Heart left ventricle (tissue), 16 donors: ENCODE measurements at regions of chrX and their contacts with region 1.

Region 1: GRCh38 chrX:70096052-70096451 is 33.8 kb downstream of the OTUD6A start:
- DNase-seq: no peak
- ATAC-seq: no peak
- H3K4me3 ChIP-seq: no peak overlapping the region
- H3K27ac ChIP-seq: no peak overlapping the region
- H3K4me1 ChIP-seq: no peaks in the 10 kb centered on the region
- H3K27me3 ChIP-seq: peaks cover 0 to 4% (median 0%) of the 10 kb centered on the region in 9 donors
- CTCF ChIP-seq: peak in 5 of 12 donors; percentile 10 to 37 (median 13)
- POLR2A ChIP-seq: no peak

Region 2: DNA sequence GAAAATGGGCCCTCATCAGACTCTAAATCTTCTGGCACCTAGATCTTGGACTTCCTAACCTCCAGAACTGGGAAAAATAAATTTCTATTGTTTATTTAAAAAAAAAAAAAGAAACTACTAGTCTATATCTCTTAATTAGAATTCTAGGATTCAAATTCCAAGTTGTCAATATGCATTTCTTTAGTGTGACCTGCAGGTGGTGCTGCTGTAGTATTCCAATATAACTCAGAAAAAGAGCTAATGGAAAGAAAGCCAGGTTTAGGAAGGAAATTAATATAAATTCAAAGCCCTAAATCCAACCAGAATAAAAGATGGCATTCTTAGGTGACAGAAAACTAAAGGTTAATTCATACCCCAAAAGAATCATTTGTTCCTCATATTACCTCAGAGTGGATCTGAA is 671.9 kb before region 1 on chrX:
- intact Hi-C with region 1: loop called in 5 of 10 experiments (anchors 5 to 10 kb)
- DNase-seq: no peak
- ATAC-seq: no peak
- H3K4me3 ChIP-seq: no peak overlapping the region
- H3K27ac ChIP-seq: no peak overlapping the region
- H3K4me1 ChIP-seq: no peaks in the 10 kb centered on the region
- H3K27me3 ChIP-seq: peaks cover 0 to 15% (median 0%) of the 10 kb centered on the region in 9 donors
- CTCF ChIP-seq: peak in 9 of 12 donors; percentile 21 to 49 (median 30)
- POLR2A ChIP-seq: no peak

Region 3: GRCh38 chrX:69493193-69493592 is 602.9 kb before region 1 on chrX:
- intact Hi-C with region 1: loop called (anchors 2 to 10 kb)
- DNase-seq: peak in 1 of 5 donors; percentile 26
- ATAC-seq: peak in 3 of 4 donors; percentile 39 to 64 (median 42)
- H3K4me3 ChIP-seq: no peak overlapping the region
- H3K27ac ChIP-seq: no peak overlapping the region
- H3K4me1 ChIP-seq: no peaks in the 10 kb centered on the region
- H3K27me3 ChIP-seq: peaks cover 0 to 34% (median 0%) of the 10 kb centered on the region in 9 donors
- CTCF ChIP-seq: peak in 11 of 12 donors; percentile 11 to 50 (median 46)
- POLR2A ChIP-seq: no peak

Region 4: DNA sequence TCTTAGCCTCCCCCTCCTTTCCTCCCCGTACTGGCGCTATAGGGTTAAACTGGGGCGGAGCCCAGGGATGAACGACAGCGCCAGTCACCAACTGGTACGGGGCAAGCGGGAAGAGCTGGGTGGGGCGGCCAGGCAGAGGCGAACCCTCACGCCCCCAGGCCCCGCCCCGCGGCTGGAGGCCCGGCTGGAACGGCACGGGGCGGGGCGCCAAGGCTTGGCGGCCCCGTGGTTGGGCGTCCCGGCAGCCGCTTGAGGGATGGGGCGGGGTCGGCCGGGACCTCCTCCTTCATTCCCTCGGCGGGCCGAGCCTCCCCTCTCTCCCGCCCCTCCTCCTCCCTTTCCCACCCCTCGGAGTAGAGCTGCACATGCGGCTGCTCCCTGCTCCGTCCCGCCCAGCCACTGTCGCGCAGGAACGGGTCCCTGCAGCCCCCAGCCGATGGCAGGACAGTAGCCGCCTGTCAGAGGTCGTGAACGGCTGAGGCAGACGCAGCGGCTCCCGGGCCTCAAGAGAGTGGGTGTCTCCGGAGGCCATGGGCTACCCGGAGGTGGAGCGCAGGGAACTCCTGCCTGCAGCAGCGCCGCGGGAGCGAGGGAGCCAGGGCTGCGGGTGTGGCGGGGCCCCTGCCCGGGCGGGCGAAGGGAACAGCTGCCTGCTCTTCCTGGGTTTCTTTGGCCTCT is 480.1 kb before region 1 on chrX and contains the start of gene EDA:
- intact Hi-C with region 1: loop called in 2 of 10 experiments (anchors 5 to 10 kb)
- DNase-seq: peak; percentile 88 to 92 (median 89)
- ATAC-seq: peak; percentile 96 to 99 (median 98)
- H3K4me3 ChIP-seq: peak within 1 kb of the TSS; percentile 51 to 90 (median 66)
- H3K27ac ChIP-seq: peak within 1 kb of the TSS in 9 of 12 donors; percentile 39 to 64 (median 56)
- H3K4me1 ChIP-seq: peaks cover 0 to 16% (median 0%) of the 10 kb centered on the region in 12 donors
- H3K27me3 ChIP-seq: peaks cover 0 to 20% (median 0%) of the 10 kb centered on the region in 9 donors
- CTCF ChIP-seq: no peak
- POLR2A ChIP-seq: no peak
- total RNA-seq, gene EDA: 4.2 to 13.6 (median 6.3) TPM

Region 5: DNA sequence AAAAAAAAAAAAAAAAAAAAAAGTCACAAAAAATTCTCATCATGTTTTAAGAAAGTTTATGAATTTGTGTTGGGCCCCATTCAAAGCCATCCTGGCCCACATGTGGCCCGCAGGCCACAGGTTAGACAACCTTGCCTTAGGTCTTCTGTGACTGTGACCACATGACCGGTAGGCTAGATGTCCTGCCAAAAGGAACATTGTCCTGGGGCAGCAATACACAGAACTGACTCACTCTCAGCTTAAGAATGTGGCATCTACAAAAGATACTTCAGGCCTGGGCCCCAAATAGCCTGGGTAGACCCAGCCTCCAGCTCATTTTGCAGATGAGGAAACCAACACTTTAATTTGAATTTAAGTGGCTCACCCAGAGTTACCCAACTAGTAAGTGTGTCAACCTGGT is 56.3 kb before region 1 on chrX:
- intact Hi-C with region 1: loop called in 5 of 10 experiments (anchors 2 to 5 kb)
- DNase-seq: no peak
- ATAC-seq: no peak
- H3K4me3 ChIP-seq: no peak overlapping the region
- H3K27ac ChIP-seq: no peak overlapping the region
- H3K4me1 ChIP-seq: no peaks in the 10 kb centered on the region
- H3K27me3 ChIP-seq: peaks cover 0 to under 1% (median 0%) of the 10 kb centered on the region in 9 donors
- CTCF ChIP-seq: no peak
- POLR2A ChIP-seq: no peak